ENCODE measurements at regions of chr14 and their contacts with region 1.

Region 1: DNA sequence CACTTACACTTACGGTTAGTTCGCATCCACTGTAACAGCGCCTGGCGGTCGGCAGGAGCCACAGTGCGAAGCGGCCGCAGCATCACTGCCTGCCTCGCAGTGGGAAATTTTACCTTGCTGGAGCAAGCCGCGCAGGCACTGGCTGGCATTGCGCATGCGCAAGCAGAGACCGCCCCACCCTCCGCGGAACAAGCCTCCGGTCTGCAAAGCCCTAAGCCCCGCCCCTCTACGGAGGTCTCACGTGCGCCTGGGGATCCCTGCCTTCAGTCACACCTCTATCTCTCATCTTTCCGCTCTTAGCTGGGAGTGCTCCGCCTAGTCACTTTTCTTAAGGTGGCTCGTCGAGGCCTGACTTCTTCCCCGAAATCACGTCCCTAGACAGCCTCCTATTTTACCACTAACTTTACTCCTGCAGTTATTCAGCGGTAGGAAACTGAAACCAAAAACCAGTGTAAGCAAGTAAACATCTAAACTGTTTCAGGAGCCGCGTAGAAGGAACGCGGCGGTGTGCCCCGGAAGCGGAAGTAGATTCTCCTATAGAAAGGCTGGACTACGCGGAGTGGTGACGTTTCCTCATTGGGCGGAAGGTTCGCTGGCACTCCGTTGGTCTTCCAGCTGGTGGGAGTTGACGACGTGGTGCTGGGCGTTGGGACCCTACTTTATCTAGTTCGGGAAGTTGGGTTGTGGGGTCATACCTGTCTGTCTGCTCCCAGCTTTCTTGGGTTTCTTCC is at the start of gene SRP54:
- DNase-seq: peak; percentile 100
- H3K4me3 Mint-ChIP-seq: no peak within 1 kb of the TSS
- H3K27ac Mint-ChIP-seq: no peak within 1 kb of the TSS
- H3K4me1 Mint-ChIP-seq: peaks cover 23% of the 10 kb centered on the region
- H3K27me3 Mint-ChIP-seq: no peaks in the 10 kb centered on the region
- total RNA-seq, gene SRP54: 82.6 to 87.7 TPM

Region 2: GRCh38 chr14:34843011-34843554 is 139.5 kb before region 1 on chr14:
- CTCF ChIA-PET with region 1: interaction called, 5 read pairs
- POLR2A ChIA-PET with region 1: no interaction called
- intact Hi-C with region 1: loop called (anchors 10 kb)
- DNase-seq: peak; percentile 54
- H3K4me3 Mint-ChIP-seq: peak overlapping the region; percentile 9
- H3K27ac Mint-ChIP-seq: peak overlapping the region; percentile 81
- H3K4me1 Mint-ChIP-seq: peaks cover 21% of the 10 kb centered on the region
- H3K27me3 Mint-ChIP-seq: no peaks in the 10 kb centered on the region

Region 3: GRCh38 chr14:34931206-34931605 is 51.4 kb before region 1 on chr14:
- CTCF ChIA-PET with region 1: interaction called, 3 read pairs
- POLR2A ChIA-PET with region 1: interaction called, 11 read pairs
- intact Hi-C with region 1: loop called (anchors 1 kb)
- DNase-seq: peak; percentile 50
- H3K4me3 Mint-ChIP-seq: peak overlapping the region; percentile 64
- H3K27ac Mint-ChIP-seq: peak overlapping the region; percentile 92
- H3K4me1 Mint-ChIP-seq: peaks cover 46% of the 10 kb centered on the region
- H3K27me3 Mint-ChIP-seq: no peaks in the 10 kb centered on the region

Region 4: GRCh38 chr14:35046048-35046741 is 63.6 kb after region 1 on chr14 and contains the start of gene FAM177A1:
- CTCF ChIA-PET with region 1: interaction called, 15 read pairs
- POLR2A ChIA-PET with region 1: interaction called, 41 read pairs
- intact Hi-C with region 1: loop called (anchors 1 kb)
- DNase-seq: peak; percentile 99
- H3K4me3 Mint-ChIP-seq: peak within 1 kb of the TSS; percentile 97
- H3K27ac Mint-ChIP-seq: peak within 1 kb of the TSS; percentile 98
- H3K4me1 Mint-ChIP-seq: peaks cover 28% of the 10 kb centered on the region
- H3K27me3 Mint-ChIP-seq: no peaks in the 10 kb centered on the region
- total RNA-seq, gene FAM177A1: 48.8 to 56.8 TPM

Region 5: DNA sequence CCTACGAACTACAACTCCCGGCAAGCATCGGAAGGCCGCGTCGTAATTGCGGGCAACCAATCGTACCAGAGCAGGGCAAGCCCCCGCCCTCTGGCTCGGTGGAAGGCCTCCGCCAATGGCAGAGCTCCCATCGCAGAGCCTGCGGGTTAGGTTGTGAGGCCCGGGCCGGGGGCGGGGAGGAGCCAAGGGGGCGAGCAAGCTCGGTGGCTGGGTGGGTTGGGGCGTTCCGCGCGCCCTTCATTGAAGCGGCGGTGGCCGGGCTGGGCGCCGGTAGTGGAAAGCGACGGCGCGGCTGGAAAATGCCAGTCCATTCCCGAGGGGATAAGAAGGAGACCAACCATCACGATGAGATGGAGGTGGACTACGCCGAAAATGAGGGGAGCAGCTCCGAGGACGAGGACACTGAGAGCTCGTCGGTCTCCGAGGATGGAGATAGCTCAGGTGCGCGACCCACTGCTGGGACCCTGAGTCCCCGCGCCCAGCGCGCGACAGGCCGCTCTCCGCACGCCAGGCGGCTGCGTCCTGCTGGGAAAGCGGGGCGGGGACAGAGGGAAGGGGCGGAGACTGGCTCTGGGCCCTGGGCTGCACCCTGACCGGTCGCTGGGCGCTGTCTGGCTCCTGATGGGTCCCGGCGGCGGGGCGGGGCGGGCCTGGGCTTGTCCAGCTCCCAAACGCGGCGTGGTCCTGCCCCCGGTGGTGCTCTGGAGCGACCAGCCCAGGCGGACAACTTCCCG is 843.8 kb after region 1 on chr14 and contains the start of gene BRMS1L:
- CTCF ChIA-PET with region 1: no interaction called
- POLR2A ChIA-PET with region 1: no interaction called
- intact Hi-C with region 1: loop called (anchors 2 kb)
- DNase-seq: peak; percentile 98
- H3K4me3 Mint-ChIP-seq: peak within 1 kb of the TSS; percentile 78
- H3K27ac Mint-ChIP-seq: peak within 1 kb of the TSS; percentile 93
- H3K4me1 Mint-ChIP-seq: peaks cover 23% of the 10 kb centered on the region
- H3K27me3 Mint-ChIP-seq: no peaks in the 10 kb centered on the region
- total RNA-seq, gene BRMS1L: 5.6 to 6.1 TPM

Region 6: DNA sequence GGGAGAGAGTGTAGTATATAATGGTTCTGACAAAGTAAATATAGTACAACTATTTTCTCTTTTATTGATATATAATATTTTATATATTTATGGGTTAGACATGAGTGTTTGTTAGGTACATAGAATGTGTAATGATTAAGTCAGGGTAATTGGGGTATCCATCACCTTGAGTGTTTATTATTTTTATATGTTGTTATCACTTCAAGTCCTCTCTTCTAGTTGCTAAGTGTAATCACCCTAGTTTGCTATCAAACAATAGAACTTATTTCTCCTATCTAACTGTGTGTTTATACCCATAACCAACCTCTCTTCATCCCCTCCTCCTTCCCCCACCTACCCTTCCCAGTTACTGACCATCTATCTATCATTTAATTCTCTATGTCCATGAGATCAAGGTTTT is 907.7 kb after region 1 on chr14:
- CTCF ChIA-PET with region 1: no interaction called
- POLR2A ChIA-PET with region 1: no interaction called
- intact Hi-C with region 1: no loop called
- DNase-seq: no peak
- H3K4me3 Mint-ChIP-seq: no peak overlapping the region
- H3K27ac Mint-ChIP-seq: no peak overlapping the region
- H3K4me1 Mint-ChIP-seq: no peaks in the 10 kb centered on the region
- H3K27me3 Mint-ChIP-seq: no peaks in the 10 kb centered on the region

Measured in activated CD4-positive, alpha-beta memory T cell treated with anti-CD3 and anti-CD28 coated beads for 36 hours (primary cell).